HepG2 (cell line): ENCODE measurements at regions of chr10 and their contacts with region 1.

Region 1: GRCh38 chr10:74213571-74214162 is 62.6 kb downstream of the ADK start:
- DNase-seq: peak; percentile 48
- ATAC-seq: peak; percentile 65; the same call in 2 of the 3 replicates
- H3K4me3 ChIP-seq: no peak overlapping the region
- H3K27ac ChIP-seq: no peak overlapping the region
- H3K4me1 ChIP-seq: no peaks in the 10 kb centered on the region
- H3K27me3 ChIP-seq: no peaks in the 10 kb centered on the region
- CTCF ChIP-seq: peak; percentile 53
- EP300 ChIP-seq: no peak
- POLR2A ChIP-seq: no peak
- RAD21 ChIP-seq: no peak

Region 2: DNA sequence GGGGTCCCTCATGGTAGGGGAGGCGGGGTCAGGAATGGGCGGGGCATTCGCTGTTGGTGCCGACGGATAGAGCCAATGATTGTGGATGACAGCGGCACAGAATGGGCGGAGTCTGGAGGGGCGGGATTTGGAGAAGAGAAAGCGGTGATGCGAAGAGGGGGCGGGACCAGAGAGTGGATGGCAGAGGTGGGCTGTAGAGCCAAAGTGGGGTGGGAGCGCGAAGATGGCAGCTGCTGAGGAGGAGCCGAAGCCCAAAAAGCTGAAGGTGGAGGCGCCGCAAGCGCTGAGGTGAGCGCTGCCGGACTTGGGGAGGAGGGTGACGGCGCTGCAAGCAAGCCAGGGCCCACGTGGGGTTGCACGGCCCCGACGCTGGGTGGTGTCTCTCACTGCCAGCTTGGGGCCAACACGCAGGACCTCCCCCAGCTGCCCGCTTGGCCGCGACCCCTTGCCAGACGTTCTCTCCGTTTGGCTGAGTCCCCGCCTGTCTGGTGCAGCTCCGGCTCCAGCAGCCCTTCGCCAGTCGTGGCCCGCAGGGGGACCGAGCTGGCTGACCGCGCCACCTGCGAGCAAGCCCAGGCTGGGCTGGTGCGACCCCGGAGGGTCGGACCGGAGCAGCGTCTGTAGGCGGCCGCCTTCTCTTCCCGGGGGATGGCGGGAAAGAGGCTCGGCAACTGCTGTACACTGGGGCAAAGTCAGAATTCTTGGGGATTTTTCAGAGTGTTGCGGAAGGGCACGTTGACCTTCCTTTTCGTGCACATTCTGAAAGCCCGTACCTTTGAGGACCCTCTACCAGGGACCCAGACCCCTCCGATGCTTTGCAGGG is 62.4 kb before region 1 on chr10 and contains the start of gene ADK:
- CTCF ChIA-PET with region 1: interaction called, 5 read pairs
- POLR2A ChIA-PET with region 1: interaction called, 3 read pairs
- in situ Hi-C with region 1: no loop called
- intact Hi-C with region 1: loop called (anchors 10 kb)
- DNase-seq: peak; percentile 96
- ATAC-seq: peak; percentile 90
- H3K4me3 ChIP-seq: peak within 1 kb of the TSS; percentile 80 to 96 (median 91)
- H3K27ac ChIP-seq: peak within 1 kb of the TSS; percentile 95
- H3K4me1 ChIP-seq: peaks cover 51% of the 10 kb centered on the region
- H3K27me3 ChIP-seq: peaks cover 0 to 4% of the 10 kb centered on the region in 2 experiments; a peak in 1 of 5 replicates
- CTCF ChIP-seq: peak; percentile 56
- EP300 ChIP-seq: no peak
- POLR2A ChIP-seq: peak; percentile 91 to 97
- RAD21 ChIP-seq: peak; percentile 58
- total RNA-seq, gene ADK: 79.1 and 129 TPM in 2 replicates

Region 3: GRCh38 chr10:74189999-74190421 is 23.7 kb before region 1 on chr10:
- CTCF ChIA-PET with region 1: no interaction called
- POLR2A ChIA-PET with region 1: no interaction called
- in situ Hi-C with region 1: no loop called
- intact Hi-C with region 1: no loop called
- DNase-seq: peak; percentile 69
- ATAC-seq: peak; percentile 91
- H3K4me3 ChIP-seq: peak overlapping the region in 2 of 3 experiments; percentile 20 to 41; a peak in 4 of 6 replicates
- H3K27ac ChIP-seq: peak overlapping the region; percentile 68
- H3K4me1 ChIP-seq: peaks cover 55% of the 10 kb centered on the region
- H3K27me3 ChIP-seq: no peaks in the 10 kb centered on the region
- CTCF ChIP-seq: no peak
- EP300 ChIP-seq: no peak
- POLR2A ChIP-seq: no peak
- RAD21 ChIP-seq: no peak